Dorsolateral prefrontal cortex (tissue), 120 donors: ENCODE measurements at regions of chr20 and their contacts with region 1.

Region 1: DNA sequence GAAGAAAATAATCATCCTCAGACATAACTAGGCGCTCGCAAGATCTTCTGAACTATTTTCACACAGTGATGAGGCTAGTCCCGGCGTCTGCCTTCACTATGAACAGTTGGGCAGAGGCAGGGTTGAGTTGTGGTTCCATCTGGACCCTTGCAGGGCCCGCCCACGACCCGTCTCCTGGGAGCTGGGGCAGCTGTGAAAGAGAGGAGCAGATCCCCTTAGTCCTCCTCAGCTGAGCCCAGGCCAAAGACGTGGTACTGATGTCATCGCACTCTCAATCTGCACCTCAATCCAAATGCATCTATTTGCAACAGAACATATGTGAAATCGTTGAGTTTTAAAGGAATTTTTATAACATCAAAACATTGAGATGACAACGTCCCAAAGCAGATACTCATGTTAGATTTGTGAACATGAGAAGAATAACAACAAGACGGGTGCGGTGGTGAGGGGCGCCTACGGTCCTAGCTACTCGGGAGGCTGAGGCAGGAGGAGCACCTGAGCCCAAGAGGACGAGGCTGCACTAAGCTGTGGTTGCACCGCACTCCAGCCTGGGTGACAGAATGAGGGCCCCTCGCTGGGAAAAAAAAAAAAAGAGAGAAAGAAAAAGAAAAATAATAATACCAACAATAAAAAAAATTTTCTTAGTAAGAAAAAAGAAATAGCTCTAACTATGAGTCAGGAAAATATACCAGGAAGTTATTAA is 15.3 kb downstream of the TCFL5 start:
- DNase-seq: peak in 6 of 10 donors; percentile 66 to 86 (median 75)
- H3K4me3 ChIP-seq: no peak overlapping the region
- H3K27ac ChIP-seq: peak overlapping the region in 55 of 59 donors; percentile 1 to 99 (median 79)
- H3K27me3 ChIP-seq: no peaks in the 10 kb centered on the region
- CTCF ChIP-seq: no peak

Region 2: GRCh38 chr20:62551407-62552323 is 294.7 kb before region 1 on chr20:
- intact Hi-C with region 1: no loop called
- DNase-seq: no peak
- H3K4me3 ChIP-seq: peak overlapping the region in 49 of 59 donors; percentile 18 to 63 (median 47)
- H3K27ac ChIP-seq: no peak overlapping the region
- H3K27me3 ChIP-seq: peaks cover 0 to 76% (median 43%) of the 10 kb centered on the region in 45 donors
- CTCF ChIP-seq: no peak

Region 3: DNA sequence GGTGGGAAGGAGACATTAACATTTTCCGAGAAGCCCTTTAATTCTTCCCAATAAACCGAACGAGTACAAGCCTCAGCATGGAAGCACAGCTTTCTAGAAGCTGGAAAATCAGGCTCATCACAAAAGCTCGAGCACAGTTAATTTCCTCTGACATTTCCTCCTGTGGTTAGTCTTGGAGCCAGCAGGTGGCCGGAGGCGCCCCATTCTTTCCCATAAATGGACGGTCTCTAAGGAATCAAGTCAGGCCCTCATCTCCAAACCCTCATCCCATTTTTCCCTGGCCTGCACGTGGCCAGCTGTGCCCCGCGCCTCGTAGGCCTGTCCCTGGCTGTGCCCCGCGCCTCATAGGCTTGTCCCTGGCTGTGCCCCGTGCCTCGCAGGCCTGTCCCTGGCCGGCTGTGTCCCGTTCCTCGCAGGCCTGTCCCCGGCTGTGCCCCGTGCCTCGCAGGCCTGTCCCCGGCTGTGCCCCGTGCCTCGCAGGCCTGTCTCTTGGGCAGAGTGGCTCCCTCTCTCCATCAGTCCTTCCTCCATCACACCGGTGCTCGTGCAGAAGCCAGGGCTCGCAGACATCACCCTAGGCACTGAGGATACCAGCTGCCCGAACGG is 157.4 kb before region 1 on chr20:
- intact Hi-C with region 1: no loop called
- DNase-seq: no peak
- H3K4me3 ChIP-seq: no peak overlapping the region
- H3K27ac ChIP-seq: no peak overlapping the region
- H3K27me3 ChIP-seq: peaks cover 0 to 21% (median 0%) of the 10 kb centered on the region in 45 donors
- CTCF ChIP-seq: no peak

Region 4: GRCh38 chr20:62800314-62801259 is 45.8 kb before region 1 on chr20:
- intact Hi-C with region 1: loop called (anchors 2 to 10 kb)
- DNase-seq: peak in 3 of 10 donors; percentile 78 to 84 (median 80)
- H3K4me3 ChIP-seq: peak overlapping the region in 5 of 59 donors; percentile 2 to 85 (median 13)
- H3K27ac ChIP-seq: peak overlapping the region in 54 of 59 donors; percentile 26 to 98 (median 68)
- H3K27me3 ChIP-seq: no peaks in the 10 kb centered on the region
- CTCF ChIP-seq: no peak

Region 5: DNA sequence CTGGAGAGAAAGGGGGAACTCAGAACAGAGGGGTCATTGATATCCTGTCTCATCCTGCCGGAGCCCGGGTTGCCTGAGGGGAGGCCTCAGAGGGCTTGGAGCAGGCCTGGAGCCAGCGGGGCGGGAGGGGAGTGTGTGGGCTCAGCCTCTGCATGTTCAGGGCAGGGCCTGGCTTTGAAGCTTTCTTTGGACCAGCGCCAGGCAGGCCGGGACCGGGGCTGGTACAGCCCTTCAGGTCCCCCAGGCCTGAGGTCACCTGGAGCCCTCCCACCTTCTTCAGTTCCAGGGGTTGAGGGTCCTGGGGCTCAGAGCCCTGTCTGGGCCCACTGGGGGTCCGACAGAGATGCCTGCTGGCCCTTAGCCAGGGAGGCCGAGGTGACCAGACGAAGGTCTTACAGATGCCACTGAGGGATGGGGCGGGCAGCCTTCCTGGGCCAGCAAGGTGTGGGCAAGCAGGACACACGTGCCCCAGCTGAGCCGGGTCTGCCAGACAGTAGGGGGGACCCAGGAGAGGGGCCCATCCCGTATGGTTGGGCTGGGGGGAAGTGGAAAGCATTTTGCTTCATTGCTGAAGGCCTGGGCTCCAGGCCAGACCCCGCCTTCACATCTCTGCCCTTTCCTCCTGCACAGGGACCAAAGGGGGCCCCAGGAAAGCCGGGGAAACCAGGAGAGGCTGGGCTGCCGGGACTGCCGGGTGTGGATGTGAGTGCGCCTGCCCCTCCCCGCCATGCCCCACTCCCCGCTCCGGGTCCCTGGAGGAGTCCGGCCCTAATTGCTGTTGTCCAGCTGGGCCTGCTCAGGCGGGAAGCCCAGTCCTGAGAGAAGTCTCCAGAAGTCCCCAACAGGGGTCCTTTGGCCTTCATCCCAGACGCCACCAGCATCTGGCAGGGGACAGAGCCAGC is 27.5 kb before region 1 on chr20:
- intact Hi-C with region 1: loop called in 1 of 2 experiments (anchors 2 kb)
- DNase-seq: peak in 9 of 10 donors; percentile 40 to 79 (median 69)
- H3K4me3 ChIP-seq: peak overlapping the region in 37 of 59 donors; percentile 3 to 72 (median 57)
- H3K27ac ChIP-seq: peak overlapping the region; percentile 47 to 99 (median 94)
- H3K27me3 ChIP-seq: peaks cover 0 to 5% (median 0%) of the 10 kb centered on the region in 45 donors
- CTCF ChIP-seq: no peak

Region 6: GRCh38 chr20:63145166-63145565 is 298.8 kb after region 1 on chr20:
- intact Hi-C with region 1: no loop called
- DNase-seq: peak in 1 of 10 donors; percentile 8
- H3K4me3 ChIP-seq: no peak overlapping the region
- H3K27ac ChIP-seq: no peak overlapping the region
- H3K27me3 ChIP-seq: peaks cover 0 to 21% (median under 1%) of the 10 kb centered on the region in 45 donors
- CTCF ChIP-seq: no peak